HepG2 (cell line): ENCODE measurements at regions of chr11 and their contacts with region 1.

Region 1: GRCh38 chr11:2137202-2138071 is 1.8 kb downstream of the IGF2 start:
- DNase-seq: peak; percentile 80
- ATAC-seq: peak; percentile 54
- H3K4me3 ChIP-seq: peak overlapping the region; percentile 72 to 84 (median 80)
- H3K27ac ChIP-seq: peak overlapping the region; percentile 80
- H3K4me1 ChIP-seq: peaks cover 46% of the 10 kb centered on the region
- H3K27me3 ChIP-seq: peaks cover 0 to 26% of the 10 kb centered on the region in 2 experiments; a peak in 3 of 5 replicates
- CTCF ChIP-seq: no peak
- EP300 ChIP-seq: no peak
- POLR2A ChIP-seq: peak in 1 of 2 experiments; percentile 95; a peak in 2 of 4 replicates
- RAD21 ChIP-seq: no peak

Region 2: GRCh38 chr11:1946812-1947484 is 190.5 kb before region 1 on chr11 and contains the start of gene MRPL23:
- CTCF ChIA-PET with region 1: no interaction called
- POLR2A ChIA-PET with region 1: interaction called, 13 read pairs
- in situ Hi-C with region 1: no loop called
- intact Hi-C with region 1: no loop called
- DNase-seq: no peak
- ATAC-seq: peak; percentile 57
- H3K4me3 ChIP-seq: no peak within 1 kb of the TSS
- H3K27ac ChIP-seq: no peak within 1 kb of the TSS
- H3K4me1 ChIP-seq: peaks cover 7% of the 10 kb centered on the region; the same call in 1 of the 2 replicates
- H3K27me3 ChIP-seq: peaks cover 0 to 4% of the 10 kb centered on the region in 2 experiments; a peak in 2 of 5 replicates
- CTCF ChIP-seq: no peak
- EP300 ChIP-seq: no peak
- POLR2A ChIP-seq: no peak
- RAD21 ChIP-seq: no peak
- total RNA-seq, gene MRPL23: 123 and 126 TPM in 2 replicates

Region 3: GRCh38 chr11:1983601-1983961 is 153.9 kb before region 1 on chr11:
- CTCF ChIA-PET with region 1: no interaction called
- POLR2A ChIA-PET with region 1: interaction called, 108 read pairs
- in situ Hi-C with region 1: no loop called
- intact Hi-C with region 1: no loop called
- DNase-seq: no peak
- ATAC-seq: no peak
- H3K4me3 ChIP-seq: no peak overlapping the region
- H3K27ac ChIP-seq: peak overlapping the region; percentile 48
- H3K4me1 ChIP-seq: no peaks in the 10 kb centered on the region
- H3K27me3 ChIP-seq: no peaks in the 10 kb centered on the region
- CTCF ChIP-seq: no peak
- EP300 ChIP-seq: no peak
- POLR2A ChIP-seq: no peak
- RAD21 ChIP-seq: no peak

Region 4: DNA sequence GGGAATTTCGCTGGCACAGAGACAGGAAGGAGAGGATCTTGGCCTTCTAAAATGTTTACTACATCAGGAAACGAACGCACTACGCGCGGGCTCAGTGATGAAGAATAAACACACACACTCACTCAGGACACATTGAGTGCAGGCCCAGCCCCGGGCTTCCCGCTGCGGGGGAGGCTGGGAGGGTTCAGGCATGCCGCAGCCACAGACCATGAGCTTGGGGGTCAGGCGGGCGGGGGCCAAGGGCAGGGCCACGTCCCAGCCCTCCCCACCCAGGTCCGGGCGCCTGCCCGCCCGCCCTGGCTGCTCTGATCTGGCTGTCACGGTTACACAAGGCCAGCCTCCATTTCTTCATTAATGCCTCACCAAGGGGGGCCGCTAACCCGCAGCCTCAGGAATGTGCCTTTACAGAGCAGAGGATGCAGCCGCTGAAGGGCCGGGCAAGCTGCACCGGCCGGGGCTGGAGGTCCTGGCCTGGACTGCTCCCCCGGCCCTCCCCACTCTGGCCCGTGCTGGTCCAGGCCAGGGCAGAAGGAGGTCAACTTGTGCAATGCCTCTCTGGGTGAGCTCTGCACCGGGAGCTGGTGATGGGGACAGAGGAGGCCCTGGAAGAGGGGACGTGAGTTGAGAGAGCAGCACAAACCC is 40.0 kb before region 1 on chr11:
- CTCF ChIA-PET with region 1: no interaction called
- POLR2A ChIA-PET with region 1: interaction called, 28 read pairs
- in situ Hi-C with region 1: no loop called
- intact Hi-C with region 1: no loop called
- DNase-seq: peak; percentile 90
- ATAC-seq: peak; percentile 92
- H3K4me3 ChIP-seq: peak overlapping the region; percentile 46 to 70 (median 61)
- H3K27ac ChIP-seq: peak overlapping the region; percentile 80
- H3K4me1 ChIP-seq: peaks cover 67% of the 10 kb centered on the region
- H3K27me3 ChIP-seq: peaks cover under 1 to 1% of the 10 kb centered on the region in 2 experiments; a peak in 3 of 5 replicates
- CTCF ChIP-seq: peak; percentile 38
- EP300 ChIP-seq: peak in 1 of 2 experiments; percentile 49; a peak in 1 of 4 replicates
- POLR2A ChIP-seq: peak in 1 of 2 experiments; percentile 28; a peak in 1 of 4 replicates
- RAD21 ChIP-seq: peak; percentile 63

Region 5: GRCh38 chr11:2122222-2123085 is 15.0 kb before region 1 on chr11:
- CTCF ChIA-PET with region 1: no interaction called
- POLR2A ChIA-PET with region 1: interaction called, 13 read pairs
- in situ Hi-C with region 1: no loop called
- intact Hi-C with region 1: no loop called
- DNase-seq: peak; percentile 31
- ATAC-seq: peak; percentile 74
- H3K4me3 ChIP-seq: peak overlapping the region; percentile 19 to 66 (median 29); a peak in 3 of 6 replicates
- H3K27ac ChIP-seq: no peak overlapping the region
- H3K4me1 ChIP-seq: peaks cover 45% of the 10 kb centered on the region
- H3K27me3 ChIP-seq: peaks cover 2 to 22% of the 10 kb centered on the region in 2 experiments; a peak in 3 of 5 replicates
- CTCF ChIP-seq: no peak; the same call in 1 of the 2 replicates
- EP300 ChIP-seq: no peak
- POLR2A ChIP-seq: no peak
- RAD21 ChIP-seq: no peak

Region 6: DNA sequence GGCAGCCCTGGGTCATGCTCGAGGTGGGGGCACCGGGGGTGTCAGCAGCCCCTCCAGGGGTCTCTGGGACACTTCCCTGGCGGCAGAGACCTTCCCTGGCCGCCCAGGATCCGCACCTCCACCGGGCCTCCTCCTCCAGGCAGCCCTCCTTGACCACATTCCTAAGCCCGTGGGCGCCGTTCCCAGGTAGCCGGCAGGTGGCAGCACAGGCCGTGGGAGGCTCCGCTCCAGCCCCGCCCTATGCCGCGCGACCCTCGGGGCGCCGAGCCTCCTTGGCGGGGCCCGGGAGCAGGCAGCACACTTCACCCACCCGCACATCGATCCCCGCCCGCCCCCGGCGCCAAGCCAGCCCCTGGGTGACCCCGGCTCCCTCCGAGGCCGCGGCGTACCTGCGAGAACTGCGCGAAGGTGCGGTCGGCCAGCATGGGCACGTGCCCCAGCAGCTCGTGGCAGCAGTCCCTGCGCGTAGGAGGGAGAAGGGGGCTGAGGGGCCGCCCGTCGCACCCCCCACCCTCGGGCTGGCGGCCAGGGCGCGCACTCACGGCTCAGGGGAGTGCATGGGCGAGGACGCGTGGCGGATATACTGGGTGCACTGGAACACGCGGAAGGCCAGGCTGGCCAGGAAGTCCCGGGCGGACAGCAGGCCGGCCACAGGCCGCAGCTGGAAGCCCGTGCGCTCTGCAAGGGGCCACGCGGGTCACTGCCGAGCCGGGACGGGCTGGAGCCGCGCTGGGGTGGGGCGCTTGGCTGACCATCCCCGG is 28.8 kb after region 1 on chr11:
- CTCF ChIA-PET with region 1: no interaction called
- POLR2A ChIA-PET with region 1: no interaction called
- in situ Hi-C with region 1: no loop called
- intact Hi-C with region 1: no loop called
- DNase-seq: no peak
- ATAC-seq: peak; percentile 44
- H3K4me3 ChIP-seq: no peak overlapping the region
- H3K27ac ChIP-seq: no peak overlapping the region
- H3K4me1 ChIP-seq: 0 out of 2 replicates have a peak, but pooled peaks cover 10% of the 10 kb centered on the region
- H3K27me3 ChIP-seq: peaks cover 39 to 86% of the 10 kb centered on the region in 2 experiments
- CTCF ChIP-seq: peak; percentile 81
- EP300 ChIP-seq: no peak
- POLR2A ChIP-seq: no peak
- RAD21 ChIP-seq: peak; percentile 60; the same call in 1 of the 2 replicates